ENCODE measurements at regions of chr22 and their contacts with region 1.

Region 1: GRCh38 chr22:36331306-36331911 is 56.4 kb downstream of the MYH9 start:
- DNase-seq: peak; percentile 94
- ATAC-seq: peak; percentile 61
- H3K4me3 Mint-ChIP-seq: peak overlapping the region; percentile 77
- H3K27ac Mint-ChIP-seq: peak overlapping the region; percentile 99
- H3K4me1 Mint-ChIP-seq: peaks cover 98% of the 10 kb centered on the region
- H3K27me3 Mint-ChIP-seq: no peaks in the 10 kb centered on the region

Region 2: GRCh38 chr22:36344106-36344827 is 12.9 kb after region 1 on chr22:
- CTCF ChIA-PET with region 1: interaction called, 31 read pairs
- DNase-seq: peak; percentile 66
- ATAC-seq: peak; percentile 25
- H3K4me3 Mint-ChIP-seq: peak overlapping the region; percentile 17
- H3K27ac Mint-ChIP-seq: peak overlapping the region; percentile 77
- H3K4me1 Mint-ChIP-seq: peaks cover 81% of the 10 kb centered on the region
- H3K27me3 Mint-ChIP-seq: no peaks in the 10 kb centered on the region

Region 3: DNA sequence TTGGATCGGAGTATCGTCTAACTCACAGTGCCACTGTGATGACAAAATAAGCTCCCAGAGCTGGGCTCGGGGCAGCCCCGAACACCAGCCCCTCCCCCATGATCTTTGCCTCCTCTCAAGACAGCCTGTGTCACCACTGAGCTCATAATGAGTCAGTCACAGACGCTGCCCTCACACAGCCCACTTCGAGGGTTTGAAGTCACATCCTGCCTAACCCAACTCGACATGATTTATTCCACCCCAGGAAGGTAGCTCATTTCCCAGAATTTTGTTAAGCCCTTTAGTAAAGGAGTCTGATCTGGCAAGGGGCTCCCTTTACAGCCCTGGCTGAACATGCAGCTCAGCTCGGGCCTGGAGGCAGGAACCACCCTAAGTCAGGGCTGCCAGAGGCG is 33.6 kb after region 1 on chr22:
- CTCF ChIA-PET with region 1: interaction called, 43 read pairs
- DNase-seq: peak; percentile 96
- ATAC-seq: peak; percentile 87
- H3K4me3 Mint-ChIP-seq: peak overlapping the region; percentile 45
- H3K27ac Mint-ChIP-seq: peak overlapping the region; percentile 85
- H3K4me1 Mint-ChIP-seq: peaks cover 95% of the 10 kb centered on the region
- H3K27me3 Mint-ChIP-seq: no peaks in the 10 kb centered on the region

Region 4: GRCh38 chr22:36379593-36380361 is 48.4 kb after region 1 on chr22:
- CTCF ChIA-PET with region 1: interaction called, 45 read pairs
- DNase-seq: peak; percentile 81
- ATAC-seq: peak; percentile 51
- H3K4me3 Mint-ChIP-seq: peak overlapping the region; percentile 70
- H3K27ac Mint-ChIP-seq: peak overlapping the region; percentile 93
- H3K4me1 Mint-ChIP-seq: peaks cover 92% of the 10 kb centered on the region
- H3K27me3 Mint-ChIP-seq: no peaks in the 10 kb centered on the region

Region 5: DNA sequence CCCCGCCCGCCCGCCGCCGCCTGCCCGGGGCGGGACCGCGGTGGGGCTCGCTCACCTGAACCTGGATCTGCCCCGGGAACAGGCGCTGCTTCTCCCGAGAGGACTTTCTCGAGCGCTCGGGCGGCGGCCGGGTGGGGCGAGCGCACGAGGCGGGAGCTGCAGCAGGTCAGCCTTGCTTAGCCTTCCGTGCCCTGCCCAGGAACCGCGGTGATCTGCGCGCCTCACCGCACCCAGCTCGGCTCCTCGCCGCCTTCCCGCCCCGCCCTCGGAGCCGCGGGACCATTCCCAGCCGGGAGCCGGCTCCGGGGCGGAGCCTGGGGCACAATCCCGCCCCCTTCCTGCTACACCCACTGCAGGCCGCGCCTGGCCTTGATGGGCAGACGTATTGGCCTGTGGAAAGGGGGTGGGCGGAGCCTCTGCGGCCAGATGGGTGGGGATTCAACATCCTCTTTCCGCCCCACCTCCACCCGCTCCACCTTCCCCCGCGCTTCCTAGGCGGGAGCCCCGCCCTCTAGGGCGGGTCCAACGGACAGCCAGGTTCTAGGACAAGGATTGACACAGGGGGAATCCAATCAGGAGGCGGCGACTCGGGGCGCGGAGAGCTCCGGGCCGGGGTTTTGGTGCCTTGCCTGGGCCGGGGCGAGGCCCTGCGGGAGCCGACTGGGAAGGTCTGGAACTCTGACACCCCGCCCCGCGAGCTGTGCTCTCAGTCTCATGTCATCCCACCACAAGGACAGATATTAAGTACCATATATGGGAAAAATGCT is 56.5 kb after region 1 on chr22 and contains the start of gene MYH9:
- CTCF ChIA-PET with region 1: interaction called, 11 read pairs
- DNase-seq: peak; percentile 100
- ATAC-seq: peak; percentile 86
- H3K4me3 Mint-ChIP-seq: peak within 1 kb of the TSS; percentile 88
- H3K27ac Mint-ChIP-seq: peak within 1 kb of the TSS; percentile 92
- H3K4me1 Mint-ChIP-seq: peaks cover 38% of the 10 kb centered on the region
- H3K27me3 Mint-ChIP-seq: no peaks in the 10 kb centered on the region
- total RNA-seq, gene MYH9: 695 to 913 TPM

Region 6: DNA sequence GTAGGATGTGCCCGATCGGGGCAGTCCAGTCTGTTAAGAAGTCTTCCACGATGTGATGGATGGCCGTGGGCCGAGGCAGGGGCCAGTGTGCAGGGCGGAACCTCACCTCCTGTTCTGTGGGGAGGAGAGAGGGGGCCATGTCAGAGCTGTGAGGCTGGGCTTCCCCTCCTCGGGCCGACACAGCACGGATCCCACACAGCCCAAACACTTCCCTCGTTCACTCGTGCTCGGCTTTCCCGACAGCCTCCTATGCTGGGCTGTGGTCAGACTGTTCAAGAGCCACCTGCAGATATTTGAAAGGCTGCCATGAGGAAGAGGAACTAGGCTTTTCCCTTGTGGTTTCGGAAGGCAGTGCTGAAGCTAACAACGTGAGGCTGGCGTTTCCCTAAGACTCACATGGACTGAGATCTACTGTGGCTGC is 162.3 kb after region 1 on chr22:
- CTCF ChIA-PET with region 1: no interaction called
- DNase-seq: no peak
- ATAC-seq: no peak
- H3K4me3 Mint-ChIP-seq: no peak overlapping the region
- H3K27ac Mint-ChIP-seq: no peak overlapping the region
- H3K4me1 Mint-ChIP-seq: no peaks in the 10 kb centered on the region
- H3K27me3 Mint-ChIP-seq: no peaks in the 10 kb centered on the region